Posterior cingulate gyrus (tissue), 11 donors: ENCODE measurements at regions of chr2 and their contacts with region 1.

Region 1: DNA sequence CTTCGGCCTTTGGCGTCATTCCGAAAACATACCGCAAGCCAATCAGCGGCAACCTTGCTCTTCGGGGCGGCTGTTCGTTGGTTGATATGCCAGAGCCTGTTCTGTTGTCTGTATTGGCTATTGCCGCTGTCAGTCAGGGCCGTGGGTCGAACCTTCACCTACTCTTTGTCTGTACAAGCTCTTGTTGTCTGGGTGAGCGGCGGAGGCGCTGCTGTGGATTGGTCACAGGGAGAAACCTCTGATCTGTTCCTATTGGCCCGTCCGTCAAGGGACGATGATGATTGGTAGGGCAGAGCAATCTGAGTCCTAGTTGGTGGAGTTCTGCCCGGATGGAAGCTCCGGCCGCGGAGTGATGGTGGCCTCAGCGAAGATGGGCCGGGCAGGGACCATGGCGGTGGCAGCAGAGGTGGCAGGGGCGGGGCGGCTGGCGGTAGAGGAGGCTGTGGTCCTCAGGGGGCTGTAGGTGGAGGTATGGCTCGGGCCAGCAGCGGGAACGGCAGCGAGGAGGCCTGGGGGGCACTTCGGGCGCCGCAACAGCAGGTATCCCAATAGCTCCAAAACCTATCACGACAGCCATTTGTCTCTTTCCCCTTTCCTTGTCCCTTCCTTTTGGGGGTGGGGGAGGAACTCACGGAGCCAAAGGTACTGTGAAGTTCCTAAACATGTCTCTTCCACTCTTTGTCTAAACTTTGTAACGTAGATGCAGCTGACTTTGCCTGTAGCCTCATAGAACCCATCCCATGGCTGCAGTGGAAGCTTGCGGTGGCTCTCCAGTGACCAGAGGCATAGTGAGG is at the start of gene WBP1:
- DNase-seq: peak; percentile 99 to 100 (median 100)

Region 2: GRCh38 chr2:74278176-74278575 is 180.2 kb before region 1 on chr2:
- intact Hi-C with region 1: no loop called
- DNase-seq: no peak

Region 3: GRCh38 chr2:74379851-74380789 is 78.2 kb before region 1 on chr2 and contains the start of gene DCTN1:
- intact Hi-C with region 1: loop called (anchors 5 kb)
- DNase-seq: peak; percentile 79 to 97 (median 90)

Region 4: DNA sequence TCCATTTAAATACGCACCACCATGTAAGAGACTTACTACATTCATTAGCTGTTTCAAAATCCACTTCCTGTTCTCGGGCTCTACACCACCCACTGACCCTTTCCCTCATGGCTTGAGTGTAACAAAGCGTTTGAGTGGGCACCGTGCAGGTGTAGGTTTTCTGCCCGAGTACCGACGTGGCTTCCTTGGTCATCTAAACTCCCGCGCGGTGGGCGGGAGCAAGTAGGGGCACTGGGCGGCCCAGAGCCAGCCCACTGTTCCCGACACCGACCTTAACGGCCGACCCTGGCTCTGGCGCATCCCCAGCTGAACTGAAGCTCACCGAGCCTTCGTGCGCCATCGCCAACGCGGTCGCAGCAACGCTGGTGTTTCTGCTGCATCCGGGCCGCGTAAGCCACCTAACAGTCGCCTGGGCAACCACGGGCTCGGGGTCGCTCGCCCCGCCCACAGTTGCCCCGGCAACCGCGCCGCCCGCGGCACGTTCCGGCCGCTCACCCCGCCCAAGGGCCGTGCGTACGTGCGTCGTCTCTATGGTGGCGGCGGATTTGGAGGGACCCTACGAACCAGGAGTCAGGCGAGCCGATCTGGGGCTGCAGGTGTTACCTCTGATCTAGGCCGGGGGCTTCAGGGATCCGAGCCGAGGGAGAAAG is 37.0 kb before region 1 on chr2 and contains the starts of genes C2orf81 and WDR54:
- intact Hi-C with region 1: loop called (anchors 5 kb)
- DNase-seq: peak; percentile 66 to 98 (median 86)

Region 5: GRCh38 chr2:74440378-74441169 is 17.8 kb before region 1 on chr2:
- intact Hi-C with region 1: loop called (anchors 2 kb)
- DNase-seq: peak; percentile 79 to 99 (median 86)

Region 6: DNA sequence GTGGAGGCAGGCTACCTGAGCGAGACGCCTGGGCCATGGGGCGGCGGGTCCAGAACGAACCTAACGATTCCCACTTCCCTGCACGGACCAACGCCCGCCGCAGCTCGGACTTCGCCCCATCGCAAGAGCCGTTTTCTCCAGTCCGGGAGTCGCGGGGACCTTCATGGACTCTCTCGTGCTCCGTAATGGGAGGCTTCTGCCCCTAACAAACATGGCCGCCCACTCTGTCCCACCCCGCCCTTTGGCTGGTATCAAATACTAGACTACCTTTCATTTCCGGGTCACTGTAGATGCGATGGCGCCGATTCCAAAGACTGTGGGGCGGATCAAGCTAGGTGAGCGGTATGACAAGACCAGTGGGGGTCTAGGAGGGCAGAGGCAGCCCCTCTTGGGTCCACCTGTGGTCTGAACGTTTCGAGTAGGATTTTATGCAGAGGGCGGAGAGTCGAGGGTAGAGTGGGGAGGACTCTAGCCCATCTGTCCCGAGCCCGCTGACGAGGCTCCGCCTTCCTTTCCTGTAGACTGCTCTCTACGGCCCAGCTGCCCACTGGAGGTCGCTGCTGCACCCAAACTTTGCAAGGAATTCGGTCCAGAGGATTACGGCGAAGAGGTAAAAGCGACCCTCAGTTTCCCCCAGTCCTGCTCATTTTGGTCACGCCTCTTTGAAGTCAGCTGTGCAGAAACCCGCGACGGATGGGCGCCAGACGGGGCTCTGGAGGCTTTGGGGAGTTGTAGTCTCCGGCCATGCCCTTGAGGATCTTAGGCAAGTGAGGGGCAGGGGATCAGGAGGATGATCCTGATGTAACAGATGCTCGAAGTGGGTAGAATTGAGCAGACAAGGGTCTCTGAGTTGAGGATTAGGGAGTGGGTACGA is 24.7 kb after region 1 on chr2 and contains the starts of genes CCDC142 and TTC31:
- intact Hi-C with region 1: loop called (anchors 1 kb)
- DNase-seq: peak; percentile 90 to 99 (median 94)